Activated CD4-positive, alpha-beta T cell treated with anti-CD3 and anti-CD28 coated beads for 36 hours (primary cell): ENCODE measurements at regions of chr20 and their contacts with region 1.

Region 1: DNA sequence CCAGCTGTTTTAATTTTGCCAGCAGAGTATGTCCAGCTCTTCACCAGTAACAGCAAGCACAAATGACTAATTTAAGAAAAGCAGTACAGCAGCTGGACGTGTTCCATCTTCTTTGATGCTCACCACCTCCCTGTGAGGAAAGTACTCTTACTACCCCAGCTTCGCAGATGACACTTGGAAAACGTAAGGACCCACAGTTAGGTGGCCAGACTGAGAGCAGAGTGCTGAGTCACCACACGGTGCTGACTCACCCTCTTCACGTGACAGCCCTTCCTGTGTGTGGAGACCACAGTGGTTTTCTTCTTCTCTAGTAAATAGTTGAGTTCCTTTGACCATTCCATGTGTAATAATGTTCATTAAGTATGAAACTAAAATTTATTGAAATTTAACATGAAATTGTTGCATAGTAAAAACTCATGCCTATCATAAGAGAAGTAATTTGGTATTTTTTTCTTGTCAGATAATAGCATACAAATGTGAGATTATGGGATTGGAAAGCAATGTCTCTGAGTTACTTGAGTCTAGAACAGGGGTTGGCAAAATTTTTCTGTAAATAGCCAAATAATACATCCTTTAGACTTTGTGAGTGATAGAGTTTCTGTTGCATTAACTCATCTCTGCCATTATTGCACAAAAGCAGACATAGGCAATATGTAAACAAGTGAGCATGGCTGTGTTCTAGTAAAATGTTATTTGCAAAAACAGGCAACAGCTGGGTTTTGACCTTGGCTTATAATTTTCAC is 76.6 kb downstream of the SLX4IP start:
- DNase-seq: peak; percentile 80
- ATAC-seq: peak; percentile 97
- H3K4me3 Mint-ChIP-seq: no peak overlapping the region
- H3K27ac Mint-ChIP-seq: peak overlapping the region; percentile 63
- H3K4me1 Mint-ChIP-seq: peaks cover 27% of the 10 kb centered on the region
- H3K27me3 Mint-ChIP-seq: no peaks in the 10 kb centered on the region

Region 2: DNA sequence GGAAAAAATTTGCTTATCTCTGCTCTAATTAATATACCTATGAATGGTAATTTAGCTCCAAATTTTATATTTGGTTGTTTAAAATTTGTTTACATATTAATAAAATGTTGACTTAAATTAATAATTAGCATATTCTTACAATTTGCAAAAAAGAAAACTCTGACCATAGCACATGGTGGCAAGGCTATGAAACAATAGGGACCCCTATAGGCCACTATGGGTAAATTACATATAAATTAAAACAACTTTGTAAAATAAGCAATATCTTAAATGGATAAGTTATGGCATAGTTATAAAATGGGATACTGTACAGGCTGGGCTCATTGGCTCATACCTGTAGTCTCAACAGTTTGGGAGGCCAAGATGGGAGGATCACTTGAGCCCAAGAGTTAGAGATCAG is 153.7 kb before region 1 on chr20:
- CTCF ChIA-PET with region 1: no interaction called
- POLR2A ChIA-PET with region 1: no interaction called
- intact Hi-C with region 1: loop called in 1 of 2 experiments (anchors 5 kb)
- DNase-seq: no peak
- ATAC-seq: no peak
- H3K4me3 Mint-ChIP-seq: no peak overlapping the region
- H3K27ac Mint-ChIP-seq: no peak overlapping the region
- H3K4me1 Mint-ChIP-seq: peaks cover 4% of the 10 kb centered on the region
- H3K27me3 Mint-ChIP-seq: no peaks in the 10 kb centered on the region

Region 3: DNA sequence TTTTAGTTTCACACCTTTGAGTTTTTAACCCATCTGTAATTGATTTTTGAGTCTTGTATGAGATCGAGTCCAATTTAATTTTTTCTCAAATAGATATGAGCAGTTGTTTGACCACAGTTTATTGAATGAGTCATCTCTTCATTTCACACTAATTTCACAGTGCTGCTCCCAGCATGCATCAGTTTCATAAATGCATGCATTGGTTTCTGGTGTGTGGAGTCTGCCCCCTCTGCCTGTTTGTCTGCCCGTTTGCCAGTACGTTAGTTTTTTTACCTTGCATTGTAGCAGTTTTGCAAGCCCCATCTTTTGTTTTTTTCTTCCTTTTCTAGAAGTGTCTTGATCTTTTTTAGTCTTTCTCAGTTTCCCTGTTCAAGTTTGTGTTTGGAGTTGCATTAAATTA is 64.7 kb before region 1 on chr20:
- CTCF ChIA-PET with region 1: no interaction called
- POLR2A ChIA-PET with region 1: no interaction called
- intact Hi-C with region 1: loop called in 1 of 2 experiments (anchors 5 kb)
- DNase-seq: peak; percentile 71
- ATAC-seq: peak; percentile 99
- H3K4me3 Mint-ChIP-seq: peak overlapping the region; percentile 61
- H3K27ac Mint-ChIP-seq: peak overlapping the region; percentile 80
- H3K4me1 Mint-ChIP-seq: peaks cover 27% of the 10 kb centered on the region
- H3K27me3 Mint-ChIP-seq: no peaks in the 10 kb centered on the region

Region 4: GRCh38 chr20:10596726-10597125 is 85.0 kb after region 1 on chr20:
- CTCF ChIA-PET with region 1: interaction called, 3 read pairs
- POLR2A ChIA-PET with region 1: no interaction called
- intact Hi-C with region 1: loop called in 1 of 2 experiments (anchors 2 kb)
- DNase-seq: no peak
- ATAC-seq: no peak
- H3K4me3 Mint-ChIP-seq: no peak overlapping the region
- H3K27ac Mint-ChIP-seq: no peak overlapping the region
- H3K4me1 Mint-ChIP-seq: peaks cover 17% of the 10 kb centered on the region
- H3K27me3 Mint-ChIP-seq: no peaks in the 10 kb centered on the region

Region 5: DNA sequence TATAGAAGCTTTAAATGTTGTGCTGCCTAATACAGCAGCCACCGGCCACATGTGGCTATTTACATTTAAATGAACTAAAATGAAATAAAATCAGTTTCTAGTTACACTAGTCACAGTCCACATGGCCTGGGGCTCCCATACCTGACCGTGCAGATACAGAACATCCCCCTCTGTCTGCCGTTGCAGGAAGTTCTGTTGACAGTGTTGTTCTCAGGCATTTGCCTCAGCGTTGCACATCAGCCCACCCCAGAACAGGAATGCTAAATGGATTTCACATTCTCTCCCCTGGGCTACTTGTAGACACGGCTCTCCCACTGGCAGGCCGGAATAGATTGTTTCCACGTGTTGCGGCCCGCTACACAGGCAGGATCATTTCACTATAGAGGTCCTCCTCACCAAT is 135.8 kb after region 1 on chr20:
- CTCF ChIA-PET with region 1: no interaction called
- POLR2A ChIA-PET with region 1: no interaction called
- intact Hi-C with region 1: no loop called
- DNase-seq: peak; percentile 14
- ATAC-seq: no peak
- H3K4me3 Mint-ChIP-seq: no peak overlapping the region
- H3K27ac Mint-ChIP-seq: no peak overlapping the region
- H3K4me1 Mint-ChIP-seq: no peaks in the 10 kb centered on the region
- H3K27me3 Mint-ChIP-seq: peaks cover 4% of the 10 kb centered on the region